Activated CD8-positive, alpha-beta T cell treated with anti-CD3 and anti-CD28 coated beads, Interleukin-2, amount 10 ng/mL, durations not matched to agents 7 days and 5 days (primary cell): ENCODE measurements at regions of chr7 and their contacts with region 1.

Region 1: DNA sequence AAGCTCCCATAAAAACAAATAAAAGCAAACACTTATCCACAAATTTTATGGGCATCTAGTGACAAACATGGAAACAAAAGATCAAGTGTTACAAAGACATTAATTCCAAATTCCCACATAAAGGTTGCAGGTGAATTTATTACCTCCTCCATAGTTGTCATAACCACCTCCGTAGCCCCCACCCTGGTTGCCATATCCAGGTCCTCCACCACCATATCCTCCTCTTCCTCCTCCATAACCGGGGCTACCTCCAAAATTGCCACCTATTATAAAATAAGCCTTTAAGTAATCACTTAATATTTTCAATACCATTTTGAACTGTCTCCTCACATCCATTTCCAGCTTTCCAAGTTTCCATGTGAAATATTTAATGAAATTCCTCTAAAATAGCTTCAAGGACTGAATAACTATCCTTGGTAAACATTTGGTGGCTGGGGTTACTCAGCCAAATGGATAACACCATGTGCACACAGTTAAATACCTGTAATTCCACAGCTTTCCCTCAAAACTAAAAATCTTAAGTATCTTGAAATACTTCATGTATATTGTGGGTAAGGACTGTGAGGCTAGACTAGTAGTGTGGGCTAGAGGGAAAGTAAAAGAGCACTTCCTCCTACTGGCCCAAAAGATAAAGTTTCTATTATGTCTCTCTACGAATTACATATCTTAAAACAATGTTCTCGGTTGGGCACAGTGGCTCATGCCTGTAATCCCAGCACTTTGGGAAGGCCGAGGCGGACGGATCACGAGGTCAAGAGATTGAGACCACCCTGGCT is 6.9 kb downstream of the HNRNPA2B1 start:
- DNase-seq: no peak
- ATAC-seq: peak; percentile 6
- H3K4me3 Mint-ChIP-seq: peak overlapping the region; percentile 100
- H3K27ac Mint-ChIP-seq: peak overlapping the region; percentile 86
- H3K4me1 Mint-ChIP-seq: peaks cover 78% of the 10 kb centered on the region
- H3K27me3 Mint-ChIP-seq: no peaks in the 10 kb centered on the region

Region 2: GRCh38 chr7:25951031-25951948 is 242.3 kb before region 1 on chr7:
- CTCF ChIA-PET with region 1: no interaction called
- POLR2A ChIA-PET with region 1: no interaction called
- DNase-seq: peak; percentile 92
- ATAC-seq: peak; percentile 98
- H3K4me3 Mint-ChIP-seq: peak overlapping the region; percentile 86
- H3K27ac Mint-ChIP-seq: peak overlapping the region; percentile 76
- H3K4me1 Mint-ChIP-seq: peaks cover 15% of the 10 kb centered on the region
- H3K27me3 Mint-ChIP-seq: peaks cover 35% of the 10 kb centered on the region

Region 3: GRCh38 chr7:26061688-26062150 is 131.9 kb before region 1 on chr7:
- CTCF ChIA-PET with region 1: no interaction called
- POLR2A ChIA-PET with region 1: no interaction called
- DNase-seq: peak; percentile 79
- ATAC-seq: peak; percentile 84
- H3K4me3 Mint-ChIP-seq: no peak overlapping the region
- H3K27ac Mint-ChIP-seq: no peak overlapping the region
- H3K4me1 Mint-ChIP-seq: peaks cover 13% of the 10 kb centered on the region
- H3K27me3 Mint-ChIP-seq: peaks cover 17% of the 10 kb centered on the region

Region 4: DNA sequence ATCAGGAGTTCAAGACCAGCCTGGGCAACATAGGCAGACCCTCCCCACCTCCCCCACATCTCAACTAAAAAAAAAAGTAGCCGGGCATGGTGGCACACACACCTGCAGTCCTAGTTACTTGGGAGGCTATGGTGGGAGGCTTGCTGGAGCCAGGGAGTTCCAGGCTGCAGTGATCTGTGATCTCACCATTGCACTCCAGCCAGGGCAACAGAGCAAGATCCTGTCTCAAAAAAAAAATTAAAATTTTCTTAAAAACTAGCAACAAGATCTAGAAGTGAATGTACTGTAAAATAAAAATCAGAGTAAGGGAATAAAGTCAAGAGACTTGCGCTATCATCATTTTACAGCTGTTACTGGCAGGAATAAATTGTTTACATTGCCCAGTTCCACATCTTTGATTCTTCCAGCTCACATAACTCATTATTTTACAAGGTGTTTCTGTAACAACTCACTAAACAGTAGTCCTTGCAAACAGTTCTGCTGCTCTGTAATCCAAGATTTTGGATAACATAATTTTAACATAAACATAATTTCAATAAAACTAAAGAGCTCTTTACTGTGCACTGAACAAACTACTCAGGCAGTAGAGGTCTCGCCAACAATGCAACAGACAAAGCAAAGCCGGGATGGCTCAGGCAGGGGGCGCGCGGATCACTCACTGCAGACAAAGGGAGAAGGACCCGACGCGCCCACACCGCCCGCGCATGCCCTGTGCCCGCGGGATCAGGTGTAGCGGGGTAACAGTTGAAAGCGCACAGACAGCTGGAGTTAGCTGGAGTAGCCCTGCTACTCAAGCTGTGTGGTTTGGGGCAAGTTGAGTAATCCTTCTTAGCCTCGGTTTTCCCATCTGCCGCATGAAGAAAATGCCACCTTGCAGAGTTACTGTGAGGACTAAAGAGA is 114.9 kb before region 1 on chr7:
- CTCF ChIA-PET with region 1: interaction called, 22 read pairs
- POLR2A ChIA-PET with region 1: interaction called, 187 read pairs
- DNase-seq: peak; percentile 85
- ATAC-seq: peak; percentile 100
- H3K4me3 Mint-ChIP-seq: peak overlapping the region; percentile 19
- H3K27ac Mint-ChIP-seq: no peak overlapping the region
- H3K4me1 Mint-ChIP-seq: peaks cover 11% of the 10 kb centered on the region
- H3K27me3 Mint-ChIP-seq: peaks cover 44% of the 10 kb centered on the region

Region 5: GRCh38 chr7:26390016-26390415 is 196.4 kb after region 1 on chr7:
- CTCF ChIA-PET with region 1: no interaction called
- POLR2A ChIA-PET with region 1: no interaction called
- DNase-seq: no peak
- ATAC-seq: no peak
- H3K4me3 Mint-ChIP-seq: no peak overlapping the region
- H3K27ac Mint-ChIP-seq: no peak overlapping the region
- H3K4me1 Mint-ChIP-seq: no peaks in the 10 kb centered on the region
- H3K27me3 Mint-ChIP-seq: peaks cover 38% of the 10 kb centered on the region